IMR-90 (cell line): ENCODE measurements at regions of chr5 and their contacts with region 1.

Region 1: DNA sequence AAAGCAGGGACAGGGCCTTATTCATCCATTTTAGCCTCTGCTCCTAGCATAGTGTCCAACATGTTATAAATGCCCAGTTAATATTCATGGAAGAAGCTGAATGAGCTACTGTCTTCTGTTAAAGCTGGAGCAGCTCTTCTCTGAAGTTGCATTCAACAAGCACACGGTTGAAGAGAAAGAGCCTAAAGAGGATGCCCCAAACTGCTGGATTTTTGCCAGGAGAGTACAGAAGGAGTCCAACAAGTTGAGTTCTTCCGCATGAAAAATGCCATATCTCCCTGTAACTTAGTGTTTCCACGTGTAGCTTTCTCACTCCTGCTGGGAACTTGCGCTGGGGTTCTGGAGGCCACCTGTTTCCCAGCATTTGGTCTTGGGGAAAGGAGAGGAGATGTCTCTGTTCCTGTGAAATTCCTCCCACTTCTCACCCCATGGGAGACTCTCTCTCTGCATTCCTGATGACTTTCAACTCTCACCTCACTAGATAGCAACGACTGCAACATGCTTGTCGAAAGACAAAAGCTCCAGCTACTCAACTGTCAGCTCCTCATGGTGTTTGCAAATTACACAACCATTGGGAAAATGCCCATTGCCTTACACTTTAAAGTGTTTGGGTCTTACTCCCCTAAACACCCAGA is 122.8 kb downstream of the KIF4B start:
- DNase-seq: no peak
- ATAC-seq: no peak
- H3K4me3 ChIP-seq: no peak overlapping the region
- H3K27ac ChIP-seq: no peak overlapping the region
- H3K4me1 ChIP-seq: no peaks in the 10 kb centered on the region
- H3K27me3 ChIP-seq: no peaks in the 10 kb centered on the region
- CTCF ChIP-seq: no peak
- POLR2A ChIP-seq: no peak
- RAD21 ChIP-seq: no peak

Region 2: DNA sequence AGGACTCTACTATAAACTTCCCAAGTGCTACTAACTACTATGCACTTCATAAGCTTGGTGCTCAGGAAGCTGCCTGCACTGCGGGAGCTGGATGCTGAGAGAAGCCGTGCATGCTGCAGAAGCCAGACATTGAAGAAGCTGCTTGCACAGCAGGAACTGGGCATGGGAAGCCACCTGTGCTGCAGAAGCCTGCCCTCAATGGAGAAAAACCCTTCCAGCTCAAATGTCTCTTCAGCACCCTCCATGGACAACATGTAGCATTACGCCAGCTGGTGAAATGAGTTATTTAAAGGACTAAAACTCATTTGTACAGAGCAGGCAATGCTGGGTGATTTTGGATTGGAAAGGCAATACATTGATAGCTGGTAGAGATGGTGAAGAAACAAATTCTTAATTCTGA is 124.5 kb after region 1 on chr5:
- CTCF ChIA-PET with region 1: no interaction called
- POLR2A ChIA-PET with region 1: no interaction called
- dilution Hi-C with region 1: no loop called
- in situ Hi-C with region 1: no loop called
- intact Hi-C with region 1: no loop called
- DNase-seq: no peak
- ATAC-seq: no peak
- H3K4me3 ChIP-seq: no peak overlapping the region
- H3K27ac ChIP-seq: no peak overlapping the region
- H3K4me1 ChIP-seq: no peaks in the 10 kb centered on the region
- H3K27me3 ChIP-seq: no peaks in the 10 kb centered on the region
- CTCF ChIP-seq: no peak
- POLR2A ChIP-seq: no peak
- RAD21 ChIP-seq: no peak

Region 3: DNA sequence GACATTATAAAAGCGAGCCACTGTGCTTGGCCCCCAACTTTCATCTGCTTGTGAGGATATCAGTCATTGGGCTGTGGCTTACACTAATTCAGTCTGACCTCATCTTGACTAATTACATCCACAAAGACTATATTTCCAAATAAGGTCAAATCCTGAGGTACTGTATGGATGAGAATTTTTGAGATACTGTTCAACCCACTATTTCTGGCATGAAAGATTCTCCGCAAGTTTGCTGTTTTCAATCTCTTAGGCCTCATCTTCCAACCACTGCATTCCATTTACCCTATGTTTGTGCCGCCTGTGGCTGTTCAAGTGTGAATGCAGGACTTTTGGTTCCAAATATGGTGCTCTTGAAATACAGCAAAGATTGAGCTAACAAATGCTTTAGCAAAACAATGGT is 789.7 kb after region 1 on chr5:
- CTCF ChIA-PET with region 1: no interaction called
- POLR2A ChIA-PET with region 1: no interaction called
- dilution Hi-C with region 1: no loop called
- in situ Hi-C with region 1: no loop called
- intact Hi-C with region 1: loop called (anchors 10 kb)
- DNase-seq: peak; percentile 41
- ATAC-seq: peak; percentile 42; the same call in 1 of the 2 replicates
- H3K4me3 ChIP-seq: no peak overlapping the region
- H3K27ac ChIP-seq: no peak overlapping the region
- H3K4me1 ChIP-seq: no peaks in the 10 kb centered on the region
- H3K27me3 ChIP-seq: no peaks in the 10 kb centered on the region
- CTCF ChIP-seq: no peak
- POLR2A ChIP-seq: no peak
- RAD21 ChIP-seq: no peak

Region 4: GRCh38 chr5:157120102-157120501 is 1983.8 kb after region 1 on chr5:
- CTCF ChIA-PET with region 1: no interaction called
- POLR2A ChIA-PET with region 1: no interaction called
- dilution Hi-C with region 1: no loop called
- in situ Hi-C with region 1: loop called (anchors 10 kb)
- intact Hi-C with region 1: no loop called
- DNase-seq: no peak
- ATAC-seq: no peak
- H3K4me3 ChIP-seq: no peak overlapping the region
- H3K27ac ChIP-seq: no peak overlapping the region
- H3K4me1 ChIP-seq: no peaks in the 10 kb centered on the region; the same call in 1 of the 2 replicates
- H3K27me3 ChIP-seq: no peaks in the 10 kb centered on the region
- CTCF ChIP-seq: no peak
- POLR2A ChIP-seq: no peak
- RAD21 ChIP-seq: no peak

Region 5: DNA sequence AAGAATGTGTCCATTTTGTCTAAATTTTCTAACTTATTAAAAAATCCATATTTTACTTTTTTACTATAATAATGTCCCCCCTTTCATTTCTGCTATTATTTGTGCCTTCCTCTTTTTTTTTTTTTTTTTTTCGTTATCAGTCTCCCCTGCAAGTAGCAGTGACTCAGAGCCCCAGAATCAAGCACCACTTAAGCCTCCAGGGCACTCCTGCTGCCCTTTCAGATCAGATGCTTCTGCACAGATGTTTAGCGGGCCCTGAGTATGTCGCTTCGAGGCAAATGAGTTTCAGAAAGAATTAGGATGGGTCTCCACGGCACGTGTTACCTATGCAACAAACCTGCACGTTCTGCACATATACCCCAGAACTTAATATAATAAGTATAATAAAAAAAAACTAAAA is 1994.6 kb after region 1 on chr5:
- CTCF ChIA-PET with region 1: interaction called, 4 read pairs
- POLR2A ChIA-PET with region 1: no interaction called
- dilution Hi-C with region 1: no loop called
- in situ Hi-C with region 1: loop called (anchors 10 kb)
- intact Hi-C with region 1: loop called (anchors 1 kb)
- DNase-seq: peak; percentile 21
- ATAC-seq: no peak
- H3K4me3 ChIP-seq: no peak overlapping the region
- H3K27ac ChIP-seq: no peak overlapping the region
- H3K4me1 ChIP-seq: no peaks in the 10 kb centered on the region
- H3K27me3 ChIP-seq: no peaks in the 10 kb centered on the region
- CTCF ChIP-seq: no peak
- POLR2A ChIP-seq: no peak
- RAD21 ChIP-seq: no peak